ENCODE measurements at regions of chr2 and their contacts with region 1.

Region 1: DNA sequence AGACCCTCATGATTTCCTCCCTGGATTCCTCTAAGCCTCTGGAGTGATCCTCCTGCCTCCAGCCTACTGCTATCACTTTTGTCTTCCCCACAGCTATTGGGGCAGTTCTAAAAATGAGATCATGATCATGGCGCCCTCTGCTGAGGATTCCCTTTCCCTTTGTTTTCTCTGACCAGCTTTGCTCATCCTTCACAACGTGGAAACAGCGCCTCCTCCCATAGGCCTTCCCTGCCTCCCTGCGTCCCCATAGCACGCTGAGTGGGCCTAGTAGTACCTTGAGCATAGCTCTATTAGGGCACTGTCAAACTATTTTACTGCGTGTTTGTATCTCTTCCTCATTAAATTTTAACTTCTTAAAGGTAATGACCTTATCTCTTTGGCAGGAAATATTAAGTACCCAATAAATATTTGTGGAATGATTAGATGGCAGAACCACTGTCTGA is 207.0 kb upstream of the FANCL start:
- DNase-seq: peak; percentile 58
- ATAC-seq: peak; percentile 50 to 78

Region 2: GRCh38 chr2:57759822-57760300 is 688.2 kb before region 1 on chr2:
- intact Hi-C with region 1: loop called in 1 of 2 experiments (anchors 5 kb)
- DNase-seq: peak; percentile 82
- ATAC-seq: peak; percentile 98 to 99

Region 3: DNA sequence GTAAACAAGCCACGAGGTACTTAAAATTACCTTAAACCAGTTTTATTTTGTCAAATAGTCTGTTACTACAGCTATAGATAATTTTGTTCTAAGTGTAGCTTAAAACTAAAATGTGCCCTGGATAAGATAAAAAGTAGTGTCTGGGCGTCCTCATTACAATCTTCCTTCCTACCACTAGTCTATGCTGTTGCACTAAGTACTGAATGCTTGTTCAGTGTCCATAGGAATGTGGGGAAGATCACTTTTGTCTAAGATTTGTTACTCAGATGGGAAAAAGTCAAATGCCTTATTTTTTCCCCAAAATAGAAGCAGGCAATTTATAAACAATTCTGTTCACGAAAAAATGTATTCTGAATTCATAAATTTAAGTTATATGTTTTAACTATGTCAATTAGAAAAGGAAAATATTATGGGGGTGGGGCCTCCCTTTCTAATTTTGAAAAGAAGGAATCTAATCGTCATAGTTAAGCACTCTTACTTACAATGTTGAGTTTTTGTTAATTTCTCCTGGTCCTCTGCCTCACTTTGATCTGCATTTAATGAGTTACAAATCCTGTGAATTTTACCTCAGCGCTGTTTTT is 541.8 kb before region 1 on chr2:
- intact Hi-C with region 1: loop called (anchors 5 to 10 kb)
- DNase-seq: no peak
- ATAC-seq: peak; percentile 87 to 89

Region 4: DNA sequence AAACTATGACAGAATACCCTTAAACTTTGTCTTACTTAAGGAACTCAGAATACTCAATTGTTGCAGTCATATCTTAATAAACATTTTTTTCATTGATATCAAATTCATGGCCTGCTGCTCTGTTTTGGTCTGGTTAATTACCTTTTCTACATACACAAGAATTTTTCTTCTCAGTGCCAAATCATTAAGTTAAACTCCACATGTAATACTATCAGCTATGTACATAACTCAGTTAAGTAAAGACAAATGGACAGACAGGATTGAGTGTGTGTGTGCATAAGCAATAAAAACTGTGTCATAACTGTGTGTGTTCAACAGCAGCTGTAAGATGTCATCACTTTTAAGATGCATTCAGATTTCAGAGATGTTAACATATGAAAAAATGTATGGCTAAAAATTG is 367.1 kb before region 1 on chr2:
- intact Hi-C with region 1: no loop called
- DNase-seq: no peak
- ATAC-seq: no peak

Region 5: GRCh38 chr2:59789505-59789904 is 1341.4 kb after region 1 on chr2:
- intact Hi-C with region 1: no loop called
- DNase-seq: no peak
- ATAC-seq: no peak